Body of pancreas (tissue), 4 donors: ENCODE measurements at regions of chr1 and their contacts with region 1.

Region 1: GRCh38 chr1:156096640-156097391 is 14.6 kb upstream of the MEX3A start:
- DNase-seq: peak; percentile 91 to 93 (median 92)
- ATAC-seq: peak; percentile 97
- H3K4me3 ChIP-seq: no peak overlapping the region
- H3K27ac ChIP-seq: peak overlapping the region; percentile 30 to 67 (median 50)
- H3K4me1 ChIP-seq: peaks cover 21% of the 10 kb centered on the region
- H3K27me3 ChIP-seq: no peaks in the 10 kb centered on the region
- CTCF ChIP-seq: peak; percentile 91 to 96 (median 96)
- POLR2A ChIP-seq: no peak

Region 2: DNA sequence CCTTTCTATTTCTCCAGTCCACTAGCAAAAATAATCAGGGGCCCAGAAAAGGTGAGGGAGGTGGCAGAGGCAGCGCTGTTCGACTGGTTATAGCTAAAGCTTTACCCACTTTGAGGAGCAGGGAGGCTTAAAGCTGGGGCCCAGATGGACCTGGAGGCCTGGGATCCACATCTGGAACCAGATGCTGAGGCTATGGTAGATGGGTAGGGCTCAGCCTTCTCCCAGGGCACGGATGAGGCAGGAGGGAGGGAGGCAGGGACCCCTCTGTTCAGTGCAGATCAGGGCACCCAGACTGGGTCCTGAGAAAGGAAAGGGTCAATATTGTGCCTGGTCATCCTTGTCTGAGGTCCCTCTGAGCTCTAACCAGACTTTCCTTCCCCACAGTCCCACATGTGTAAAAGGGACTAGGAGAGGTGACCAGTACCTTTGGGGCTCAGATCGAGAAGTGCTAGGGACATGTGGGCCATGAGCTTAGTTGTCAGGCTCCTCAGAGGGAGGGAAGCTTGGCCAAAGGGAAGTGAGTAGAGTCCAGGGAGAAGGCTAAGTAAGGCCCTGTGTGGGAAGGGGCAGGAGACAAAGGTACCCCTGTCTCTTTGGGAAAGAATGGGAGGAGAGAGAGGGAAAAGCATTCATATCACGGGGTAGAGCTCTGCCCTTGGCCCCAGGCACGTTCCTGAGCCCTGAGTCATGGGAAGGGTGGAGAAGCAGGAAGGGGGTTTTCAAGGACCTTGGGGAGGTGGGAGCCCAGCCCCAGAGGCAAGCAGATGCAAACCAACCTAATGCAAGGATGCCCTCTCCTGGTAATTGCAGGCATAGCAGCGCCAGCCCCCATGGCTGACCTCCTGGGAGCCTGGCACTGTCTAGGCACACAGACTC is 33.1 kb after region 1 on chr1:
- intact Hi-C with region 1: loop called (anchors 2 kb)
- DNase-seq: peak; percentile 89 to 94 (median 92)
- ATAC-seq: peak; percentile 90
- H3K4me3 ChIP-seq: no peak overlapping the region
- H3K27ac ChIP-seq: peak overlapping the region; percentile 81 to 90 (median 86)
- H3K4me1 ChIP-seq: peaks cover 57% of the 10 kb centered on the region
- H3K27me3 ChIP-seq: no peaks in the 10 kb centered on the region
- CTCF ChIP-seq: peak; percentile 97 to 99 (median 99)
- POLR2A ChIP-seq: peak in 2 of 3 donors; percentile 50 to 62

Region 3: DNA sequence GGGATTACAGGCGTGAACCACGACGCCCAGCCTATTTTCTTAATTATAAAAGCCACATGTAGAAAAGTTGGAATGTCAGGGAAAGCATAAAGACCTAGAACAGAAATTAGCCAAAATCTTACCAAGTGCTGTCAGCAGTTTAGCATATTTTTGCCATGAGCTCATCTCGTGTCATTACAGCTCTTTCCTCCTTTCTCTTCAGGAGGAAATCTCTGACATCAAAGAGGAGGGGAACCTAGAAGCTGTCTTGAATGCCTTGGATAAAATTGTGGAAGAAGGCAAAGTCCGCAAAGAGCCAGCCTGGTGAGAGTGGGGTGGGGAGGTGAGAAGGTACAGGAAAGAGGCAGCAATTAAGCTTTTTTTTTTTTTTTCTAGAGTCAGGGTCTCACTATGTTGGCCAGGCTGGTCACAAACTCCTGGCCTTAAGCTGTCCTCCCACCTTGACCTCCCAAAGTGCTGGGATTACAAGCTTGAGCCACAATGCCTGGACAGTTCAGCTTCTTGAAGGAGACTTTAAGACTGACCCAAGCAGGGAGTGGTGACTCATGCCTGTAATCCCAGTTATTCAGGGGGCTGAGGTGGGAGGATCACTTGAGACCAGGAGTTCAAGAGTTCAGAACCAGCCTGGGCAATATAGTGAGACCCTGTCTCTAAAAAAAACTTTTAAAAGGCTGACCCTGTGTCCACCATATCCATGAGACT is 136.8 kb after region 1 on chr1:
- intact Hi-C with region 1: no loop called
- DNase-seq: no peak
- ATAC-seq: no peak
- H3K4me3 ChIP-seq: no peak overlapping the region
- H3K27ac ChIP-seq: no peak overlapping the region
- H3K4me1 ChIP-seq: no peaks in the 10 kb centered on the region
- H3K27me3 ChIP-seq: no peaks in the 10 kb centered on the region
- CTCF ChIP-seq: no peak
- POLR2A ChIP-seq: no peak

Region 4: DNA sequence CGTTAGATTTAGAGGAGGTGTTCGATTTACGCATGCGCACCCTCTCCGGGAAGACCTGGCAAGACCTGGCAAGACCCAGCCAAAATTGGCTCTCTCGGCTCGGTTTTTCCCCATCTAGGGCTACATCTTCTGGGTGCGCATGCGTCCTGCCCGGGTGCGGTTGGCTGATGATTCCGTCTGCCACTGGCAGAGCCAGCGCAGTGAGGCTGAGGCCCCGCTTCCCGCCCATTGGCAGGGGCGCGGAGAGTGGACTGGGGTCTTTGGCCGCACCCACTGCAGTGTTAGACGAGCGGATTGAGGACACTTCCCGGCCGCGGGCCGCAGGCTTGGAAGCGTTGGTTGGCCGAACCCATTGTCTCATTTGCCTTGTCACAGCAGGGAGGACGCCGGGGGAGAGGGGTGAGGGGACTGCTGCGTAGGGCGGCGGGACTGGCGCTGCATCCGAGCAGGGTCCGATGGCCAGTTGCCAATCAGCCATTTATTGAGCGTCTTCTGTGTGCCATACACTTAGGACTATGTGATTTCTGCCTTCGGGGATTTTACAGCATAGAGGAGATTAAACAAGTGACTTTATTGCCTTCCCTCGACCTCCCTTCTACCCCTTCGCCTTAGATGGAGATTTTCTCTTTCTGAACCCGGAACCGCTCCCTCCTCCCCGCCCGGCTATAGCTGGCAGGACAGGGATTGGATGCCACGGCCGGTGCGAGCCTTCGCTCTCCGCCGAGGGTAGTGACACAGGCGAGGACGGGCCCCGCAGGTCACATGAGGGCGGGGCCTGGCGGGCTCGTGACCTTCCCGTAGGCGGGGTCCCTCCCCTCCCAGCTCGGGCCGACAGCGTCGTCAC is 360.0 kb after region 1 on chr1:
- intact Hi-C with region 1: no loop called
- DNase-seq: peak; percentile 99 to 100 (median 100)
- ATAC-seq: peak; percentile 87
- H3K4me3 ChIP-seq: peak overlapping the region in 1 of 2 donors; percentile 2
- H3K27ac ChIP-seq: peak overlapping the region; percentile 99 to 100 (median 100)
- H3K4me1 ChIP-seq: peaks cover 27% of the 10 kb centered on the region
- H3K27me3 ChIP-seq: no peaks in the 10 kb centered on the region
- CTCF ChIP-seq: no peak
- POLR2A ChIP-seq: peak; percentile 87 to 96 (median 94)